GM23248 (cell line): ENCODE measurements at regions of chr2 and their contacts with region 1.

Region 1: DNA sequence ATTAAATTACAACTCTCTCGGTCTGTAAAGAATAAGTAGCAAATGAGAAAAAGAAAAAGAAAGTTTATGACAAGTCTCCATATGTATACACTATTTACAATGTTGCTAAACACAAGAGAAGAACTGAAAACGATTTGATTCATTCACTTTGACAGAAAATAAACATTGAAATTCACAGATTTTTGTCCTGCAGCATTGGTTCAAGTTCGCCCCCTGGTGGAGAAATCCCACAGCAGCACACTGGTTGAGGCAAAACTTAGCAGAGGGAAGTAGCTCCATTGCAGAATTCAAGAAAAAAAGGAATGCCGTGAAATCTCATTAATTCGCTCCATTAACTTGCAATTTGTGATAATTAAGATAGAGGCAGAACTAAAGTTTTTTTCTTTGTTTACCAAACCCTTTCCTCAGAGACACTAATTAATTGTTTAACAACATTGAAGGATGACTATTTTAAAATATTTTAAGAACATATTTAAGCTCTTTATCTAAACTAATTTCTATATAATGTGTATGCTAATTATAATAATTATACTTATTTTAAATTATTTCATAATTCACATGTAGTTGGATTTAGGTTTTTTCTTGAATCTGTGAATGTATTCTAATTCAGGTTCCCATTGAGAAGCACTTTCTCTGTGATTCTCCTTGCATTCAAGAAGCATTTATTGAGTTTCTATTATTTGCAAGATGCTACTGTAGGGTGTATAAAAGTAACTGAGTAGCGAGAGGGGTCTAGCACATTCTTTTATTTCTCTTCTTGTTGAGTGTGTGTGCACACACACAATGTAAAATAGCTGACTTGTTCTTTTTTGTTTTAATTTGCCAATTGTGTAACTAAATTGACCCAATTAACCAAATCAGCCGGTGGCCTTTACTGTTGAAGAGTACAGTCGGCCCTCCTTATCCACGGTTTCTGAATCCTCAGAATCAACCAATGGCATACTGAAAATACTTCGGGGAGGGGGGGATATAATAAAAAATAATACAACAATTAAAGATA is 74.1 kb downstream of the COL4A3 start:
- DNase-seq: peak; percentile 65
- H3K4me3 ChIP-seq: no peak overlapping the region
- H3K27ac ChIP-seq: no peak overlapping the region
- H3K4me1 ChIP-seq: no peaks in the 10 kb centered on the region
- H3K27me3 ChIP-seq: no peaks in the 10 kb centered on the region

Region 2: DNA sequence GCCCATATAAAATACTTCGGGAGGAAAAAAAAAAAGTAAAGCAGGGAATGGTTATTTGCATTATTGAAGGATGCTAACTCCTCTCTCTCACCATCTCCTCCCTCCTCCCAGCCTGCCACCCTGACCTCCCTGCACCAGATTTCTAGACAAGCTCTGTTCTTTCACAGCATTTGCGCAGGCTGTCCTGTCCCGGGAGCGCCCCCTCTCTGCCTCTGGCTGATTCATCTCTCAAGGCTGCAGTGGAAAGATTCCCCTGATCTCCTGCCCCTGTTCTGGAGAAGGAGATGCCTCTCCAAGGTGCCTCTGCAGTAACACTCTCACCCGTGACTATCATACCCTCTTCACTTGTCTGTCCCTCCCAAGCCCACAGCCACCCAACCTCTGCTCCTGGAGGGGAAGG is 113.0 kb before region 1 on chr2:
- in situ Hi-C with region 1: loop called (anchors 25 kb)
- DNase-seq: no peak
- H3K4me3 ChIP-seq: no peak overlapping the region
- H3K27ac ChIP-seq: no peak overlapping the region
- H3K4me1 ChIP-seq: no peaks in the 10 kb centered on the region
- H3K27me3 ChIP-seq: no peaks in the 10 kb centered on the region

Region 3: GRCh38 chr2:227491386-227491785 is 252.8 kb after region 1 on chr2:
- in situ Hi-C with region 1: no loop called
- DNase-seq: no peak
- H3K4me3 ChIP-seq: no peak overlapping the region
- H3K27ac ChIP-seq: no peak overlapping the region
- H3K4me1 ChIP-seq: no peaks in the 10 kb centered on the region
- H3K27me3 ChIP-seq: no peaks in the 10 kb centered on the region